Activated CD4-positive, alpha-beta T cell treated with anti-CD3 and anti-CD28 coated beads for 36 hours (primary cell): ENCODE measurements at regions of chr16 and their contacts with region 1.

Region 1: DNA sequence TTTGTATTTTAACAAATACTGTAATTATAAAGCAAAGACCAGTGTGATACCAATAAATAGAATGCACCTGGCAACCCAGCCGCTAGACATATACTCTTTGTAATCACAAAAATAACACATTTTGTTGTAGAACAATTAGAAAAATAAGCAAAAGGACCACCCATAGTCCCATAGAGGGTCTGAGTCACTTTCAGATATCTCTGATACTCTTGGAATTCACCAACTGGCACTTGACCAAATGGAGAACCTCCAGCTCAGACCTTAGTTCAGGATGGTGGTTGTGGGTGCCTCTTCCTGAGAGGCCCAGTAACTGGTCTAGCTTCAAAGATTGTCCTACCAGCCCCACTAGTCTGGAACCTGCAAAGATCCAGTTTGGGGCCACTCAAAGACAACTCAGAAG is 789 bp upstream of the TERF2 start:
- DNase-seq: no peak
- ATAC-seq: no peak
- H3K4me3 Mint-ChIP-seq: peak overlapping the region; percentile 100
- H3K27ac Mint-ChIP-seq: peak overlapping the region; percentile 55
- H3K4me1 Mint-ChIP-seq: peaks cover 29% of the 10 kb centered on the region
- H3K27me3 Mint-ChIP-seq: no peaks in the 10 kb centered on the region

Region 2: GRCh38 chr16:69186642-69187445 is 199.8 kb before region 1 on chr16 and contains the start of gene SNTB2:
- CTCF ChIA-PET with region 1: no interaction called
- POLR2A ChIA-PET with region 1: no interaction called
- intact Hi-C with region 1: loop called in 1 of 2 experiments (anchors 1 kb)
- DNase-seq: peak; percentile 91
- ATAC-seq: peak; percentile 83
- H3K4me3 Mint-ChIP-seq: peak within 1 kb of the TSS; percentile 83
- H3K27ac Mint-ChIP-seq: peak within 1 kb of the TSS; percentile 96
- H3K4me1 Mint-ChIP-seq: peaks cover 50% of the 10 kb centered on the region
- H3K27me3 Mint-ChIP-seq: no peaks in the 10 kb centered on the region
- total RNA-seq, gene SNTB2: 15.7 to 17.2 TPM

Region 3: DNA sequence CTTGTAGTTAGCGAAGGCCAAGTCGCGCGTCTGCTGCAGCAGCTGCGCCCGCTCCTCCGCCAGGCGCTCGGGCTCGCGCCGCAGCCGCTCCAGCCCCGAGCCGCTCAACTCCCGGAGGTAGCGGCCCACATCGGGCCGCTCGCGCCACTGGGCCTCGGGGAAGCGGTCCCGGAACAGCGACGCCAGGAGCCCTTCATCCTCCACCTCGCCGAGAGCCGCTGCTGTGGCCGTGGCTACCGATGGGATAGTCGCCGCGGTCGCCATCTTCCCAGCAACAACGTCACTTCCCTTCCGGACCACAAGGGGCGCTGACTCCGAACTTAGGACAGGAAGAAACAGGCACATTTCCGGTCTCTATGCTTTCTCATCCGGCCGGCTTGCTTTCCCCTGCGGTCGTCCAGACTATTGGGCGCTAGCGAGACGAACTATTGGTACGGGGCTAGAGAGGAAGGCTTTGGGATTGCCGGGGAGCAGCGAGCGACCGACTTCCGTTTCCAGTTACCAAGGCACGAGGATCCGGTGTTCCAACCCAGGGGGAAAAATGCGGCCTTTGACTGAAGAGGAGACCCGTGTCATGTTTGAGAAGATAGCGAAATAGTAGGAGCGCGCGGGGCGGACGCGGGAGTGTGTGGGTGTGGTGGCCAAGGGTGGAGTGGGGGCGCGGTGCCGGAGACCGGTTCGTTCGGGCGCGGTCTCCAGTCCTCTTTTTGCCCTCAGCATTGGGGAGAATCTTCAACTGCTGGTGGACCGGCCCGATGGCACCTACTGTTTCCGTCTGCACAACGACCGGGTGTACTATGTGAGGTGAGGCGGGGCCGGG is 47.1 kb before region 1 on chr16 and contains the starts of genes COG8 and NIP7:
- CTCF ChIA-PET with region 1: interaction called, 8 read pairs
- POLR2A ChIA-PET with region 1: interaction called, 3 read pairs
- intact Hi-C with region 1: loop called (anchors 1 to 2 kb)
- DNase-seq: peak; percentile 95
- ATAC-seq: peak; percentile 89
- H3K4me3 Mint-ChIP-seq: peak within 1 kb of the TSS; percentile 96
- H3K27ac Mint-ChIP-seq: peak within 1 kb of the TSS; percentile 98
- H3K4me1 Mint-ChIP-seq: peaks cover 37% of the 10 kb centered on the region
- H3K27me3 Mint-ChIP-seq: no peaks in the 10 kb centered on the region
- total RNA-seq, gene COG8: 30.0 to 30.3 TPM
- total RNA-seq, gene NIP7: 39.1 to 41.3 TPM

Region 4: GRCh38 chr16:69726296-69727060 is 339.9 kb after region 1 on chr16 and contains the start of gene NQO1:
- CTCF ChIA-PET with region 1: no interaction called
- POLR2A ChIA-PET with region 1: no interaction called
- intact Hi-C with region 1: loop called in 1 of 2 experiments (anchors 1 kb)
- DNase-seq: peak; percentile 95
- ATAC-seq: peak; percentile 99
- H3K4me3 Mint-ChIP-seq: peak within 1 kb of the TSS; percentile 79
- H3K27ac Mint-ChIP-seq: peak within 1 kb of the TSS; percentile 89
- H3K4me1 Mint-ChIP-seq: peaks cover 24% of the 10 kb centered on the region
- H3K27me3 Mint-ChIP-seq: no peaks in the 10 kb centered on the region
- total RNA-seq, gene NQO1: 9.9 to 11.4 TPM

Region 5: GRCh38 chr16:69761983-69762813 is 375.6 kb after region 1 on chr16 and contains the start of gene WWP2:
- CTCF ChIA-PET with region 1: no interaction called
- POLR2A ChIA-PET with region 1: no interaction called
- intact Hi-C with region 1: loop called in 1 of 2 experiments (anchors 2 kb)
- DNase-seq: peak; percentile 86
- ATAC-seq: peak; percentile 76
- H3K4me3 Mint-ChIP-seq: peak within 1 kb of the TSS; percentile 91
- H3K27ac Mint-ChIP-seq: peak within 1 kb of the TSS; percentile 98
- H3K4me1 Mint-ChIP-seq: peaks cover 35% of the 10 kb centered on the region
- H3K27me3 Mint-ChIP-seq: no peaks in the 10 kb centered on the region
- total RNA-seq, gene WWP2: 43.3 to 44.6 TPM